Panc1 (cell line): ENCODE measurements at regions of chr9 and their contacts with region 1.

Region 1: DNA sequence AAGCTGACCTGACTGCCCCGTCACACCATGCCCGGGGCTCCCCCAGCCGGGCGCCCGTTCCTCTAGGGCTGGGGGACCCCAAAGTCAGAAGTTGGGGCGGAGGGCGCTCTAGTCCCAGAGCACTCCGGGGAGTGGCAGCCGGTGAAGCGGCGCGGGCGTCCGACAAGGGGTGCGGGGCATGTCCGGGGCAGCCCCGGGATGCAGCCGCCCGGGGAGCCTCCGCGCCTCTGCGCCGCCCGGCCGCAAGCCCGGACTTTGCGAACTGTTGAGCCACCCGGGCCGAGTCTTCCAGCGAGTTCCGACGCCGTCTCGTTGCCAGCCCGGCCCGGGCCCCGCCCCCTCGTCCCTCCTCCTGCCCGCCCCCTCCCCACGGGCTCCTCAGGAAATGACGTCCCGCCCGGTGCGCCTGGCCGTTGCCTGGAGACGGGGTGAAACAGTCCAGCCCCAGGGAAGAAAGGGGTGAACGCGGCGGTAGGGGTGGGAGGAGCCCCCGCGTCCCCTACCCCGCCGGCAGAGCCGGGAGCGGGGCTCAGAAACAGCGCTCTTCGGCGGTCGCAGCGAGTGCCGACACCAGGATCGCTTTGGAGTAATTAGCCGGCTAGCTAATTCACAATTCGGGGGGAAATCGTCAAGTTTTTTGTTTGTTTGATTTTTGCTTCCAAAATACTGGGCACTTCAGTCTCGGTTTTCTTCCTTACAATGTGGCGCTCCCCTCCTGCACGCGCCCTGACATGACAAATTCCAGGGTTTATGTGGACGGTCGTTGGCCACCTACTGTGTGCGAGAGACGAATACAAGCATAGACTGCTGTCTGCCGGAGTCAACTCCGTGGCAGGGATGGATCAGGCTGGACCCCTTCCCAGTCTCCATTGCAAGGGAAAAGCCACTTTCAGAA is at the start of gene WHRN:
- DNase-seq: no peak
- ATAC-seq: peak; percentile 83
- H3K4me3 ChIP-seq: peak within 1 kb of the TSS; percentile 65 to 86
- H3K27ac ChIP-seq: peak within 1 kb of the TSS; percentile 90
- H3K4me1 ChIP-seq: peaks cover 21% of the 10 kb centered on the region
- H3K27me3 ChIP-seq: no peaks in the 10 kb centered on the region
- CTCF ChIP-seq: no peak
- total RNA-seq, gene WHRN: 18.0 TPM

Region 2: DNA sequence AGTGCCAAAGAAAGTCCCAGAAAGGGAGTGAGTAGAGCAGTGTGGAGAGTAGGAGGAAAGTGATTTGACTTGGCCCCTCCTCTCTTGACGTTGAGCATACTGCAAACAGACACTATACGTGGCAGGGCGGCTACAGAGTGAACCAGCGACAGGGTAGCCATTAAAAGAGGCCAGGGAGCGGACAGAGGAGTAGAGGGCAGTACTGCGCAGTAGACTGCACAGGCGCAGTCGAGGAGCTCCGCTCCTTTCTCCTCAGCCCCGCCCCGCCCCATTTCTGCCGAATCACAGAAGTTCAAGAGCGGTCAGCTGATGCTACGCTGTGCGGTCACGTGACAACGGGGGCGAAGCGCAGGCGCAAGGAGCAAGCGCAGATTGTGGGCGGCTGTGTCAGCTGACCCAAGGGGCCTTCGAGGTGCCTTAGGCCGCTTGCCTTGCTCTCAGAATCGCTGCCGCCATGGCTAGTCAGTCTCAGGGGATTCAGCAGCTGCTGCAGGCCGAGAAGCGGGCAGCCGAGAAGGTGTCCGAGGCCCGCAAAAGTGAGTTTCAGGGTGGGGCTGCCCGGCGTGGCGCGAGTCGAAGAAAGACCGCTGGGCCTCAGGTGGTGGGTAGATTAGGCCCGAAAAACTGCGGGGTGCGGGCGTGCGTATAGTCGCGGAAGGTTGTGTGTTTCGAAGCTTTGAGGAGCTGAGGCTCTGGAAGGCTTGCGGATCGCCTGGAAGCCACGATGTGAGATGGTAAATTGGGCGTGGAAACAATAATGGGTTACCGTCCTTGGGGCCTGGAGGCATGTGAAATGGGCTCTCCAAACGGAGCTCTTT is 82.2 kb after region 1 on chr9 and contains the start of gene ATP6V1G1:
- CTCF ChIA-PET with region 1: no interaction called
- POLR2A ChIA-PET with region 1: interaction called, 3 read pairs
- in situ Hi-C with region 1: no loop called
- intact Hi-C with region 1: loop called (anchors 1 kb)
- DNase-seq: peak; percentile 78
- ATAC-seq: peak; percentile 98
- H3K4me3 ChIP-seq: peak within 1 kb of the TSS; percentile 87
- H3K27ac ChIP-seq: peak within 1 kb of the TSS; percentile 94
- H3K4me1 ChIP-seq: peaks cover 5% of the 10 kb centered on the region
- H3K27me3 ChIP-seq: no peaks in the 10 kb centered on the region
- CTCF ChIP-seq: no peak
- total RNA-seq, gene ATP6V1G1: 71.8 TPM

Region 3: GRCh38 chr9:114653556-114654159 is 148.2 kb after region 1 on chr9:
- CTCF ChIA-PET with region 1: interaction called, 5 read pairs
- POLR2A ChIA-PET with region 1: no interaction called
- in situ Hi-C with region 1: no loop called
- intact Hi-C with region 1: loop called (anchors 5 kb)
- DNase-seq: peak; percentile 54
- ATAC-seq: peak; percentile 76
- H3K4me3 ChIP-seq: no peak overlapping the region
- H3K27ac ChIP-seq: no peak overlapping the region
- H3K4me1 ChIP-seq: no peaks in the 10 kb centered on the region
- H3K27me3 ChIP-seq: no peaks in the 10 kb centered on the region
- CTCF ChIP-seq: peak; percentile 88